ENCODE measurements at regions of chr7 and their contacts with region 1.

Region 1: DNA sequence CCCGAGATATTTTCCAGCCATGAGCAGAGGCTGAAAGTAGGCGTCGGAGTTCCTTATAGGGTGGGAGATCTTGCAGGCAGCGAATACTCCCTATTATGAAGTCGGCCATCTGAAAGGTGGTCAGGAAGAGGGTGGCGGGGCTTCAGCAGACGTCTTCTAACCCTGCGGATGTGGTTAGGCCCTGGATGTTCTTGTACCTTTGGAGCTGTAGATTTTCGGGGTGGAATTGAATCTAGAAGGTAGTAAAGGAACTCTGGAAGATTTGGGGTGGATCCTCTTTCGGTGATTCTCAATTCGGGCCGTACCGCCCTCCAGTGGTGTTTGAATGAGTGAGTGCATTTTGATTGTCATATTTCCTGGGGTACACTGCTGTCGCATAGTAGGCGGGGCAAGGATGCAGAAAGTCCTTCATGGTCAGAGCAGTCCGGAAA is 635 bp downstream of the NUP205 start:
- DNase-seq: no peak
- H3K4me3 ChIP-seq: peak overlapping the region; percentile 64 to 86 (median 72)
- H3K27ac ChIP-seq: peak overlapping the region; percentile 88 to 90 (median 88)
- H3K4me1 ChIP-seq: peaks cover 9 to 24% (median 21%) of the 10 kb centered on the region in 4 donors
- H3K27me3 ChIP-seq: no peaks in the 10 kb centered on the region
- CTCF ChIP-seq: peak; percentile 47 to 51 (median 47)
- EP300 ChIP-seq: no peak
- POLR2A ChIP-seq: no peak

Region 2: DNA sequence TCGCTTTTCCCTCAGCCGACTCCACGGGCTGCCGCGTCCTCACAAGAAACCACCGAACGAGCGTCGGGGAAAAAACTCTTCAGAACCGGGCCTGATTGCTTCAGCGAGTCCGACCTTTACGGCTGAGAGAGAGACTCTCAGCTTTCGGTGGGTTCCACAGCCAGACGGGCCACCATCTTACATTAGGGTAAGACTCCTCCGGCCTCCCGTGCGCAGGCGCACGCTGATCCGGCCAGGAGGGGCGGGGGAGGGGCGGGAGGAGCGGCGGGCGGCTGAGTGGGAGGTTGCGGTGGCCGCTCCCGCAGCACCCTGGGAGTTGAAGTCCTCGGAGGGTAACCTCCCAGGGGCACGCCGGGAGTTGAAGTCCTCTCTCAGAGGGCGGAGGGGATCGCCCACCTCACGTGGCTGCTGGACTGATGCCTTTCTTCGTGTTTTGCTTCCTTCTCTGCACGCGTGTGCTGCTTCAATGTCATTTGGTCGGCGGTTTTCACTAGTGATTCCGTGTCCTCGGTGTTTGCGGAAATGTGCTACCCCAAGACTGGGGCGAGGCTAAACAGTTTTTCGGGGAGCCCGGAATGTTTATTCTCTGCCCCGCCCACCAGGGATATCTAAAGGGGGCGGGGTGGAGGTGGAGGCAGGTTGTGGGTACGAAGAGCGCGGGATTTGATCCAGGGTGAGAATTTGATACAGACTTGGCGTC is 48.3 kb before region 1 on chr7 and contains the start of gene CNOT4:
- intact Hi-C with region 1: loop called (anchors 2 kb)
- DNase-seq: peak; percentile 97
- H3K4me3 ChIP-seq: peak within 1 kb of the TSS; percentile 66 to 90 (median 80)
- H3K27ac ChIP-seq: peak within 1 kb of the TSS; percentile 90 to 94 (median 91)
- H3K4me1 ChIP-seq: peaks cover 17 to 45% (median 37%) of the 10 kb centered on the region in 4 donors
- H3K27me3 ChIP-seq: no peaks in the 10 kb centered on the region
- CTCF ChIP-seq: peak in 1 of 3 experiments; percentile 8
- EP300 ChIP-seq: no peak
- POLR2A ChIP-seq: no peak
- total RNA-seq, gene CNOT4: 18.6 to 28.7 (median 26.4) TPM